Mucosa of descending colon (tissue), 3 donors: ENCODE measurements at regions of chr19 and their contacts with region 1.

Region 1: GRCh38 chr19:45643024-45643926 is 4.1 kb upstream of the EML2 start:
- DNase-seq: peak; percentile 89 to 96 (median 94)
- ATAC-seq: peak; percentile 48
- H3K4me3 ChIP-seq: no peak overlapping the region
- H3K4me1 ChIP-seq: peaks cover 26% of the 10 kb centered on the region
- CTCF ChIP-seq: peak; percentile 95

Region 2: DNA sequence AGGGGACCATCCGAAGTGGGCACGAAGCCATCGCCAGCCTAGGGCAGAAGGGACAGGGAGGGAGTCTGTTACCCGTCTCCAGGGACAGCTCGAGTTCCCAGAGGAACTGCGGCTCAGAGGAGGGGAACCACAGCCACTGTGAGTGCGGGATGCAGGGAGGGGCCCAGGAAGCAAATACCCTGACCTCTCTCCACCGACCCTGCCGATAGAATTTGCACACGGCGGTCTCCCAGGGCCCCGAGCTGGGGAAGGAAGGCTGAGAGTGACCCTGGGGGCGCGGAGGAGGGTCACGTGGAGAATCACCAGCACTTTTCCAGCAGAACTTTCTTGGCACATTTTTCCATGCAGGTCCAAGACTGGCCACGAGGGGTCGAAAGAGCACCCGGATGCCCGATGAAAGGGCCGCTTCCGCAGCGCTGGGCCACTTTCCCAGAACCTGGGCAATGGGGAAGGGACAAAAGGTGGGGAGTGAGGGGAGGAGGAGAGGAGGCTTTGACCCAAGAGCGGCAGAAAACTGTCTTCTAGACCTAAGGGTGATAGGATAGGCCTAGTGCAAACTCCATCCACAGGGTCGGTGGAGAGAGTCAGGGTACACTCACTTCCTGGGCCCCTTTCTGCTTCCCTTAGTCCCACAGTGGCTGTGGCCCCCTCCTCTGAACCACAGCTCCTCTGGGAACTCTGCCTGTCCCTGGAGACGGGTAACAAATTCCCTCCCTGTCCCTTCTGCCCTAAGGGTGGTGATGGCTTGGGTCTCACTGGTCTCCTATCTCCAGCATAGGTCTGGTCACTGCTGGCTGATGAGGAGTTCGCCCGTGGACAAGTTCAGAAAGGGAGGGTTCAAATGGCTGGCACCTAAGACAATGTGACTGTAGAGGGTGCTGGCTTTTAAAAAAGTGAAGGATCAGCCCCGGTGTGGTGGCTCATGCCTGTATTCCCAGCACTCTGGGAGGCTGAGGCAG is 35.9 kb before region 1 on chr19:
- intact Hi-C with region 1: loop called in 1 of 2 experiments (anchors 5 kb)
- DNase-seq: peak; percentile 70 to 88 (median 84)
- ATAC-seq: peak; percentile 96
- H3K4me3 ChIP-seq: no peak overlapping the region
- H3K4me1 ChIP-seq: peaks cover 5% of the 10 kb centered on the region
- CTCF ChIP-seq: peak; percentile 80

Region 3: GRCh38 chr19:45615795-45616708 is 27.2 kb before region 1 on chr19:
- intact Hi-C with region 1: loop called in 1 of 2 experiments (anchors 2 kb)
- DNase-seq: peak; percentile 94 to 97 (median 94)
- ATAC-seq: peak; percentile 92
- H3K4me3 ChIP-seq: no peak overlapping the region
- H3K4me1 ChIP-seq: peaks cover 21% of the 10 kb centered on the region
- CTCF ChIP-seq: no peak